ENCODE measurements at regions of chr5 and their contacts with region 1.

Region 1: GRCh38 chr5:10863763-10864383 is 102.8 kb upstream of the DAP start:
- DNase-seq: peak; percentile 33
- ATAC-seq: peak; percentile 67
- H3K4me3 ChIP-seq: no peak overlapping the region
- H3K27ac ChIP-seq: no peak overlapping the region
- H3K4me1 ChIP-seq: peaks cover 29% of the 10 kb centered on the region
- H3K27me3 ChIP-seq: peaks cover 0 to 5% of the 10 kb centered on the region in 2 experiments; a peak in 1 of 5 replicates
- CTCF ChIP-seq: peak; percentile 75
- EP300 ChIP-seq: no peak
- POLR2A ChIP-seq: no peak
- RAD21 ChIP-seq: peak; percentile 27; the same call in 1 of the 2 replicates

Region 2: GRCh38 chr5:10233505-10233904 is 630.4 kb before region 1 on chr5:
- CTCF ChIA-PET with region 1: no interaction called
- POLR2A ChIA-PET with region 1: no interaction called
- in situ Hi-C with region 1: no loop called
- intact Hi-C with region 1: no loop called
- DNase-seq: peak; percentile 37
- ATAC-seq: peak; percentile 84
- H3K4me3 ChIP-seq: no peak overlapping the region
- H3K27ac ChIP-seq: no peak overlapping the region
- H3K4me1 ChIP-seq: no peaks in the 10 kb centered on the region
- H3K27me3 ChIP-seq: no peaks in the 10 kb centered on the region
- CTCF ChIP-seq: peak; percentile 62
- EP300 ChIP-seq: no peak
- POLR2A ChIP-seq: no peak
- RAD21 ChIP-seq: 0 out of 2 replicates have a peak, but pooled peaks have one; percentile 35

Region 3: GRCh38 chr5:10987930-10988504 is 124.1 kb after region 1 on chr5:
- CTCF ChIA-PET with region 1: no interaction called
- POLR2A ChIA-PET with region 1: no interaction called
- in situ Hi-C with region 1: no loop called
- intact Hi-C with region 1: loop called (anchors 5 kb)
- DNase-seq: peak; percentile 43
- ATAC-seq: peak; percentile 99
- H3K4me3 ChIP-seq: no peak overlapping the region
- H3K27ac ChIP-seq: no peak overlapping the region
- H3K4me1 ChIP-seq: no peaks in the 10 kb centered on the region
- H3K27me3 ChIP-seq: peaks cover 0 to 5% of the 10 kb centered on the region in 2 experiments; a peak in 2 of 5 replicates
- CTCF ChIP-seq: peak; percentile 90
- EP300 ChIP-seq: no peak
- POLR2A ChIP-seq: no peak
- RAD21 ChIP-seq: peak; percentile 74

Region 4: GRCh38 chr5:11046160-11046559 is 182.3 kb after region 1 on chr5:
- CTCF ChIA-PET with region 1: no interaction called
- POLR2A ChIA-PET with region 1: no interaction called
- in situ Hi-C with region 1: no loop called
- intact Hi-C with region 1: loop called (anchors 10 kb)
- DNase-seq: no peak
- ATAC-seq: peak; percentile 46; the same call in 2 of the 3 replicates
- H3K4me3 ChIP-seq: no peak overlapping the region
- H3K27ac ChIP-seq: no peak overlapping the region
- H3K4me1 ChIP-seq: peaks cover 6% of the 10 kb centered on the region; the same call in 1 of the 2 replicates
- H3K27me3 ChIP-seq: no peaks in the 10 kb centered on the region
- CTCF ChIP-seq: peak; percentile 58
- EP300 ChIP-seq: no peak
- POLR2A ChIP-seq: no peak
- RAD21 ChIP-seq: no peak

Region 5: GRCh38 chr5:11182441-11183268 is 318.8 kb after region 1 on chr5:
- CTCF ChIA-PET with region 1: no interaction called
- POLR2A ChIA-PET with region 1: no interaction called
- in situ Hi-C with region 1: no loop called
- intact Hi-C with region 1: loop called (anchors 5 kb)
- DNase-seq: peak; percentile 23
- ATAC-seq: peak; percentile 73
- H3K4me3 ChIP-seq: no peak overlapping the region
- H3K27ac ChIP-seq: no peak overlapping the region
- H3K4me1 ChIP-seq: no peaks in the 10 kb centered on the region
- H3K27me3 ChIP-seq: no peaks in the 10 kb centered on the region
- CTCF ChIP-seq: peak; percentile 59
- EP300 ChIP-seq: no peak
- POLR2A ChIP-seq: no peak
- RAD21 ChIP-seq: no peak

Measured in HepG2 (cell line).